Activated naive CD4-positive, alpha-beta T cell treated with anti-CD3 and anti-CD28 coated beads for 36 hours (primary cell): ENCODE measurements at regions of chr19 and their contacts with region 1.

Region 1: GRCh38 chr19:43934985-43935708 is at the start of gene ZNF45:
- DNase-seq: peak; percentile 91
- H3K4me3 Mint-ChIP-seq: peak within 1 kb of the TSS; percentile 92
- H3K27ac Mint-ChIP-seq: peak within 1 kb of the TSS; percentile 89
- H3K4me1 Mint-ChIP-seq: peaks cover 24% of the 10 kb centered on the region
- H3K27me3 Mint-ChIP-seq: no peaks in the 10 kb centered on the region
- total RNA-seq, gene ZNF45: 5.4 to 6.3 TPM

Region 2: GRCh38 chr19:43826787-43827754 is 108.1 kb before region 1 on chr19 and contains the start of gene ZNF283:
- CTCF ChIA-PET with region 1: no interaction called
- intact Hi-C with region 1: loop called (anchors 1 kb)
- DNase-seq: peak; percentile 92
- H3K4me3 Mint-ChIP-seq: peak within 1 kb of the TSS; percentile 88
- H3K27ac Mint-ChIP-seq: peak within 1 kb of the TSS; percentile 75
- H3K4me1 Mint-ChIP-seq: peaks cover 17% of the 10 kb centered on the region
- H3K27me3 Mint-ChIP-seq: no peaks in the 10 kb centered on the region
- total RNA-seq, gene ZNF283: 6.8 to 7.7 TPM

Region 3: GRCh38 chr19:43950834-43951645 is 15.9 kb after region 1 on chr19 and contains the start of gene ZNF221:
- CTCF ChIA-PET with region 1: interaction called, 3 read pairs
- intact Hi-C with region 1: loop called (anchors 1 kb)
- DNase-seq: peak; percentile 79
- H3K4me3 Mint-ChIP-seq: peak within 1 kb of the TSS; percentile 94
- H3K27ac Mint-ChIP-seq: peak within 1 kb of the TSS; percentile 77
- H3K4me1 Mint-ChIP-seq: peaks cover 5% of the 10 kb centered on the region
- H3K27me3 Mint-ChIP-seq: peaks cover 4% of the 10 kb centered on the region
- total RNA-seq, gene ZNF221: 0.45 to 0.89 TPM

Region 4: DNA sequence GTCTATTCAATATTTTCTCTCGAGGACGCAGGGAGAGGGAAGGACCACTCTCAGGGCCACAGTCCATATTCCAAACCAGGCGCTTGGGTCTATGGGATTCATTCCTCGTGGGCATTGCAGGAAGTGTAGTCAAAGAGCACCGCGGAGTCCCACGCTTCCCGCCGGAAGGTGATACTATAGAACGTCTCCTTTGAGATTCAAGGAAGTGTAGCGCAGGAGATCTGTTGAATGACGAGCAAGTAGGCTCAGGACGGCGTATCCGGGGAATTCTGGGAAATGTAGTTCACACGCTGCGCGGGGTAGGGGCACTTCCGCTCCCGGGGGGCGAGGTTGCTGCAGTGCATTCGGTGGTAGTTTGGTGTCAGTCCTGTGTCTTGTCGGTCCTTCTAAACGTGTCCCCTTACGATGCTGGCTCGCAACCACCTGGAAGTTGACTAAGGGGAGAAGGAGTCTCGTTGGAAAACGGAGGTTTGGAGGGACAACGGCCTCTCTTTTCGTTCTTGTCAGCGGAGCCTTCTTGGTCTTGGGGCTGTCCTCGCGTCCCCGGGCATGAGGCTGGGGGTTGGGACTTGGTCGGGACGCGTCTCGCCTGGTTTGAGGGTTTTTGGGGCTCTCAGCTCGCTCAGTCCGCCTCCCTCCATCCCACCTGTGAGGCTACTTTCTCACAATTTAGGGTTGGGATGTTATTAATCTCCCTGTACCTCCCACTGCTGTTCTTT is 136.8 kb after region 1 on chr19 and contains the start of gene ZNF284:
- CTCF ChIA-PET with region 1: no interaction called
- intact Hi-C with region 1: no loop called
- DNase-seq: peak; percentile 87
- H3K4me3 Mint-ChIP-seq: peak within 1 kb of the TSS; percentile 86
- H3K27ac Mint-ChIP-seq: peak within 1 kb of the TSS; percentile 13
- H3K4me1 Mint-ChIP-seq: peaks cover 19% of the 10 kb centered on the region
- H3K27me3 Mint-ChIP-seq: no peaks in the 10 kb centered on the region
- total RNA-seq, gene ZNF284: 0.76 to 0.86 TPM

Region 5: DNA sequence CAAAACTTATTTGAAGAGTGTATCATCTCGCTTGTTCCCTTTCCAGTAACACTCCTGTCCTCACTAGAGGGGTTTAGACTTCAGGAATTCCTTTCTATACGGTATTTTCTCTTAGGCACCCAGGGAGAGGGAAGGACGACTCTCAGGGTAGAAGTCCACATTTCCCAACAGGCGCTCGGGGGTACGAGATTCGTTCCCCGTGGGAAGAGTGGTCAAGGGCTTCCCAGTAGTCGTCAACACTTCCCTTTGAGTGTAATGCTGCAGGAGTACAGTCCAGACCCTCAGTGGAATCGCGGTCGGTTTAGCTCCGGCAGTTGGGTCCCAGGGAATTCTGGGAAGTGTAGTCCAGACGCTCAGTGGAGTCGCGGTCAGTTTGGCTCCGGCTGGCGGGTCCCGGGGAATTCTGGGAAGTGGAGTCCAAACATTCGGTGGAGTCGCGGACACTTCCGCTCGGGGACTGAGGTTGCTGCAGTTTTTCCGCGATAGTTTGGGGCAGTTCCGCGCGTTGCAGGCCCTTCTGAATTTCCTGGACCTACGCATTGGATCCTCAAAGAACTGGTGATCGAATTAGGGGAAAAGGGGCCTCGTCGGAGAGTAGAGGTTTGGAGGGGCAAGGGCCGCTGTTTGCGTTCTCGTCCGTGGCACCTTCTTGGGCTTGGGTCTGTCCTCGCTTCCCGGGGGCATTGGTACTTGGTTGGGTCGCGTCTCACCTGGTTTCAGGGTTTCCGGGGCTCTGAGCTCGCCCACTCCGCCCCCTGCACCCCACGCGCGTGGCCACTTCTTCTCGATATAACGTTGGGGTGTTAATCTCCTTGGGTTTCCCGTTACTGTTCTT is 159.0 kb after region 1 on chr19 and contains the start of gene ZNF224:
- CTCF ChIA-PET with region 1: no interaction called
- intact Hi-C with region 1: loop called (anchors 2 kb)
- DNase-seq: peak; percentile 91
- H3K4me3 Mint-ChIP-seq: peak within 1 kb of the TSS; percentile 98
- H3K27ac Mint-ChIP-seq: peak within 1 kb of the TSS; percentile 87
- H3K4me1 Mint-ChIP-seq: peaks cover 13% of the 10 kb centered on the region
- H3K27me3 Mint-ChIP-seq: no peaks in the 10 kb centered on the region
- total RNA-seq, gene ZNF224: 8.7 to 10.9 TPM

Region 6: GRCh38 chr19:44500148-44500956 is 565.2 kb after region 1 on chr19 and contains the start of gene ZNF180:
- CTCF ChIA-PET with region 1: no interaction called
- intact Hi-C with region 1: loop called (anchors 1 kb)
- DNase-seq: peak; percentile 96
- H3K4me3 Mint-ChIP-seq: peak within 1 kb of the TSS; percentile 86
- H3K27ac Mint-ChIP-seq: peak within 1 kb of the TSS; percentile 83
- H3K4me1 Mint-ChIP-seq: peaks cover 30% of the 10 kb centered on the region
- H3K27me3 Mint-ChIP-seq: peaks cover 4% of the 10 kb centered on the region
- total RNA-seq, gene ZNF180: 3.3 to 5.2 TPM